ENCODE measurements at regions of chr13 and their contacts with region 1.

Region 1: GRCh38 chr13:99916366-99917103 is 55.0 kb downstream of the ZIC5 start:
- DNase-seq: peak in 1 of 2 experiments; percentile 65
- H3K4me3 ChIP-seq: no peak overlapping the region
- H3K4me3 Mint-ChIP-seq: no peak overlapping the region
- H3K27ac Mint-ChIP-seq: no peak overlapping the region
- H3K4me1 ChIP-seq: no peaks in the 10 kb centered on the region
- H3K4me1 Mint-ChIP-seq: no peaks in the 10 kb centered on the region
- H3K27me3 ChIP-seq: no peaks in the 10 kb centered on the region
- H3K27me3 Mint-ChIP-seq: peaks cover 12% of the 10 kb centered on the region
- CTCF ChIP-seq: peak; percentile 93 to 99

Region 2: DNA sequence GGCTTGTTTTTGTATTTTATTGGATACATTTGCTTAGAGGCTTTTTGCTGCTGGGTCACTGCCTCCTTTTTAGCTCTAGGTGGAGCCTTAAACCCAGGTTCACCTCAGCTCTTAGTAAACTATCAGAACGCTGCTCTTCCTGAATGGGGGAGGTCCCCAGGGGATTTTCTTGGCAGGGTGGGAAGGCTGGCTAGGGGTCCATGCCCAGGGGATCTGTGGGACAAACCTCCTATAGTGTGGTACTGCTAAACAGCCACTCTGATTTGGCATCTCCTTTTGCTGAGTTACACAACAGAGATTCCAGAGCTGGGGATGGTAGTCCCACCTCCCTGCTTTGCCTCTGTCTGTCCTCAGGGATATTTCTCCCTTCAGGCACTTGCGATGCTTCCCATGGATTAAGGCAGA is 149.9 kb before region 1 on chr13:
- CTCF ChIA-PET with region 1: no interaction called
- POLR2A ChIA-PET with region 1: no interaction called
- intact Hi-C with region 1: loop called (anchors 5 kb)
- DNase-seq: peak in 1 of 2 experiments; percentile 11
- H3K4me3 ChIP-seq: no peak overlapping the region
- H3K4me3 Mint-ChIP-seq: no peak overlapping the region
- H3K27ac Mint-ChIP-seq: no peak overlapping the region
- H3K4me1 ChIP-seq: no peaks in the 10 kb centered on the region
- H3K4me1 Mint-ChIP-seq: no peaks in the 10 kb centered on the region
- H3K27me3 ChIP-seq: no peaks in the 10 kb centered on the region
- H3K27me3 Mint-ChIP-seq: no peaks in the 10 kb centered on the region
- CTCF ChIP-seq: peak; percentile 27 to 32

Region 3: GRCh38 chr13:99847318-99847750 is 69.2 kb before region 1 on chr13:
- CTCF ChIA-PET with region 1: no interaction called
- POLR2A ChIA-PET with region 1: no interaction called
- intact Hi-C with region 1: no loop called
- DNase-seq: no peak
- H3K4me3 ChIP-seq: no peak overlapping the region
- H3K4me3 Mint-ChIP-seq: no peak overlapping the region
- H3K27ac Mint-ChIP-seq: no peak overlapping the region
- H3K4me1 ChIP-seq: no peaks in the 10 kb centered on the region
- H3K4me1 Mint-ChIP-seq: no peaks in the 10 kb centered on the region
- H3K27me3 ChIP-seq: no peaks in the 10 kb centered on the region
- H3K27me3 Mint-ChIP-seq: peaks cover 19% of the 10 kb centered on the region
- CTCF ChIP-seq: no peak

Region 4: DNA sequence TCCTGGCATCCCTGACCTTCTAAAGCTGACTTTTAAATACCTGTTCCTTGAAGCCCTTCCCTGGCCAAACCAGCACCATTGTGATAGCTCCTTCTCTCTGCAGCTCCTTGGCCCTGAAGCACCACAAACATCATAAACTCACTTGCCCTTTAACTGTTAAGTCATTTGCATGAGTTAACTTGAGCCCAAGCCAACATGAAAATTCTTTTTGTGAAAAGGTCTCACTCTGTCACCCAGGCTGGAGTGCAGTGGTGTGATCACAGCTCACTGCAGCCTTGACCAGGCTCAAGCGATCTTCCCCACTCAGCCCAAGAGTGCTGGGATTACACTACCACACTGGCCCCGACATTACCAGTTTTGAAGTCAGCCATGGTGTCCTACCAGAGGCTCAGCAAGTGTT is 32.7 kb before region 1 on chr13:
- CTCF ChIA-PET with region 1: no interaction called
- POLR2A ChIA-PET with region 1: no interaction called
- intact Hi-C with region 1: no loop called
- DNase-seq: no peak
- H3K4me3 ChIP-seq: no peak overlapping the region
- H3K4me3 Mint-ChIP-seq: no peak overlapping the region
- H3K27ac Mint-ChIP-seq: no peak overlapping the region
- H3K4me1 ChIP-seq: no peaks in the 10 kb centered on the region
- H3K4me1 Mint-ChIP-seq: no peaks in the 10 kb centered on the region
- H3K27me3 ChIP-seq: no peaks in the 10 kb centered on the region
- H3K27me3 Mint-ChIP-seq: peaks cover 12% of the 10 kb centered on the region
- CTCF ChIP-seq: no peak

Region 5: DNA sequence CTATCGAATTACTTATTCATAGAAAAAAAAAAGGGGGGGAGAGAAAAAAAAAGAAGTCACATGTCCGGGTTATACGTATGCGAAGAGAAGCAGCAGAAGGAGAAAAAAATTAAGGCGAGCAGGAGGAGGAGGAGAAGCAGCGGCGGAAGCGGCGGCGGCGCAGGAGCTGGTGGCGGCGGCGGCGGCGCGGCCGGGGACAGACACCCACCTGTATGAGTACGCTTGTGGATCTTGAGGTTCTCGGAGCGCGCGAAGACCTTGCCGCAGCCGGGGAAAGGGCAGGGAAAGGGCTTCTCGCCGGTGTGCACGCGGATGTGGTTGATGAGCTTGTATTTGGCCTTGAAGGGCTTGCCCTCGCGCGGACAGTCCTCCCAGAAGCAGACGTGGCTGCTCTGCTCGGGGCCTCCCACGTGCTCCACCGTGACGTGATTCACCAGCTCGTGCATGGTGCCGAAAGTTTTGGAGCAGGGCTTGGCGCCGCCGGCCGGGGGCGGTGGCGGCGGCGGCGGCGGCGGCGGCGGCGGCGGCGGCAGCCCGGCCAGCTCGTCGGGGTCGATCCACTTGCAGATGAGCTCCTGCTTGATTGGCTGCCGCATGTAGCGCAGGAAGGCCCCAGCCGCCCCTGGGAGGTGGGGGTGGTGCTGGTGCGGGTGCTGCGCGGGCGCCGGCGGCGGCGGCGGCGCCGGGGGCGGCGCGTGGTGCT is 53.5 kb after region 1 on chr13:
- CTCF ChIA-PET with region 1: no interaction called
- POLR2A ChIA-PET with region 1: no interaction called
- intact Hi-C with region 1: loop called (anchors 5 kb)
- DNase-seq: peak; percentile 72 to 78
- H3K4me3 ChIP-seq: peak overlapping the region; percentile 70
- H3K4me3 Mint-ChIP-seq: peak overlapping the region; percentile 98
- H3K27ac Mint-ChIP-seq: peak overlapping the region; percentile 57
- H3K4me1 ChIP-seq: peaks cover 14% of the 10 kb centered on the region; the same call in 1 of the 2 replicates
- H3K4me1 Mint-ChIP-seq: peaks cover 13% of the 10 kb centered on the region
- H3K27me3 ChIP-seq: peaks cover 7% of the 10 kb centered on the region
- H3K27me3 Mint-ChIP-seq: peaks cover 41% of the 10 kb centered on the region
- CTCF ChIP-seq: no peak

Measured in Caco-2 (cell line).